BJ (cell line): ENCODE measurements at regions of chr1 and their contacts with region 1.

Region 1: DNA sequence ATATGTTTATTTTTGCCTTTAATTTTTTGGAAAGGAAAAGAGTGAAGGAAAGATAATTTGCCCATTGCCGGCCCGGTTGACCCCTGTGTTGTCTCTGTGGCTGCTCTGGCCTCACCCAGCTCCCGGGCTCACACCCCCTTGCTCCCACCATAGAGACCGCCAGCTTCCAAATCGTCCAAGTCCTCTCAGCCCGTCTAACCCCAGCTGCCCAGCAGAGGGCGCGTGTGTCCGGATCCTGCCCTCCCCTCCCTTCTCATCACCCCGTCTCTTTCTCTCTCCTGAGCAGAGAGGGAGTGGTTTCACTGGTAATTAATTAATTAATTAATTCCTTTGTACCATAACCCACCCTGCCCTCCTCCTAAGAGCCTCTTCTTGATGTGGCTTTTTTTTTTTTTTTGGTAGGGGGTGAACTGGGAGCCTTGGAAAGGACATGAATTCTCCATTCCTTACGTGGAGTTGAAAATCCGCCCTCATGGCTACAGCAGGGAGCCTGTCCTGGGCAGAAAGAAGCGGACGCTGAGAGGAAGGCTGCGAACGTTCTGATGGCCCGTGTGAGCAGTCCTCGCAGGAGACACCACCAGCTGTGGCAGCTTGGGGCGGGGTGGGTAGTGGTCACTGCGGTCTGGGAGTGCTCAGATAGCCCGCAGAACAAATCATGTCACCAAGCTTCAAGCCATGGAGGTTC is 45.9 kb downstream of the KIAA0040 start:
- DNase-seq: no peak
- H3K4me3 ChIP-seq: no peak overlapping the region
- H3K27me3 ChIP-seq: no peaks in the 10 kb centered on the region; the same call in none of the 2 replicates
- CTCF ChIP-seq: peak; percentile 97

Region 2: GRCh38 chr1:174828264-174828663 is 318.4 kb before region 1 on chr1:
- CTCF ChIA-PET with region 1: no interaction called
- POLR2A ChIA-PET with region 1: no interaction called
- DNase-seq: no peak
- H3K4me3 ChIP-seq: no peak overlapping the region
- H3K27me3 ChIP-seq: no peaks in the 10 kb centered on the region
- CTCF ChIP-seq: no peak

Region 3: GRCh38 chr1:175023043-175023921 is 123.4 kb before region 1 on chr1 and contains the start of gene MRPS14:
- CTCF ChIA-PET with region 1: interaction called, 34 read pairs
- POLR2A ChIA-PET with region 1: interaction called, 13 read pairs
- DNase-seq: peak; percentile 90
- H3K4me3 ChIP-seq: peak within 1 kb of the TSS; percentile 93
- H3K27me3 ChIP-seq: no peaks in the 10 kb centered on the region
- CTCF ChIP-seq: no peak
- polyA plus RNA-seq, gene MRPS14: 22.4 and 33.3 TPM in 2 replicates

Region 4: DNA sequence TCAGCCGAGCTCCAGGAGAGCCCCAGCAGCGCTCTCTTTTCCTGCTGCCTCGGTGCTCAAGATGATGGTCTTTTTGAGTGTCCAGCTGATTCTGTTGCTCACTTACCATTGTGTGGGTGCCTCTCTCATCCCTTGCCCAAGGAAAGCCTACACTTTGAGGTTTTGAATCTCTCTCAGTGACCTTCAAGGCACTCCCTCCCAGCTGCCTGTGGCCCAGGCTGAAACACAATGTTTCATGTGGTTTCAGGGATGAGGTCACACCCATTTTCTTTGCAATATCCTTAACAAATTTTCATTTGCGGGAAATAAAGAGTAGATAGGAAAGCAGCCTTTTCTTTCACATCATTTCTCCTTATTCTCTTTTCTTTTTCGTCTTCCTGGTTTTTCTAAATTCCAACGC is 110.8 kb before region 1 on chr1:
- CTCF ChIA-PET with region 1: interaction called, 12 read pairs
- POLR2A ChIA-PET with region 1: no interaction called
- DNase-seq: no peak
- H3K4me3 ChIP-seq: no peak overlapping the region
- H3K27me3 ChIP-seq: no peaks in the 10 kb centered on the region
- CTCF ChIP-seq: no peak

Region 5: DNA sequence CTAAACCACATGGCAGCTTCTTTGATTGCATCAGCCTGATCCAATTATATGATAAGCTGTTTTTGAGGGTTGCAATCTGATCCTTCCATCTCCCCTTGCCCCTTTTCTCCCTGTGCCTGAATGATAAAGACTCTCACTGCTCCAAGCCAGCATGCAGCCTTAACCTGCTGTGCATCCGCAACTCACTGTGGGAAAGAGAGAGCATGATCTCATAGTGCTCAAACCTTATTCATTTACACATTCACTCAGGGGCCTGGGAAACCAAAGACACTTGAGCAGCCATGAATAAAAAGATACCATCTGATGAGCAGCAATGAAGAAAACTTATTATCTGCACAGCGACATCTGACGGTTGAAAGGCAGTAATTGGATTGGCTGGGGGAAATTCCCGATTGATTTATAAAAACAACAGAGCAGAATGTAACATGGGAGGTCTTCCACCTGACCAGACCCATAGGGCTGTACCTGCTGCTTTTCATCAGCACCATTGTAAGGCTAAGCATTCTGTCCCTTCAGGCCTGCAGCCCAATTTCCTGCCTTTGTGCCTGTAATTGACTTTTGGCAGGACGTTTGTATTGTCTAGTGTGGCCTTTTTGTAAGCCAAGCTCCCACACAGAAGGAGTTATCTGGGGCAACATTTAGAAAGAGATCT is 16.5 kb before region 1 on chr1:
- CTCF ChIA-PET with region 1: interaction called, 82 read pairs
- POLR2A ChIA-PET with region 1: interaction called, 3 read pairs
- DNase-seq: no peak
- H3K4me3 ChIP-seq: no peak overlapping the region
- H3K27me3 ChIP-seq: no peaks in the 10 kb centered on the region
- CTCF ChIP-seq: no peak

Region 6: GRCh38 chr1:175319418-175320230 is 173.0 kb after region 1 on chr1:
- CTCF ChIA-PET with region 1: interaction called, 126 read pairs
- POLR2A ChIA-PET with region 1: no interaction called
- DNase-seq: peak; percentile 3
- H3K4me3 ChIP-seq: no peak overlapping the region
- H3K27me3 ChIP-seq: no peaks in the 10 kb centered on the region
- CTCF ChIP-seq: peak; percentile 85